ENCODE measurements at regions of chr14 and their contacts with region 1.

Region 1: GRCh38 chr14:21241218-21241819 is 27.9 kb downstream of the HNRNPC start:
- DNase-seq: peak; percentile 25
- H3K4me3 Mint-ChIP-seq: no peak overlapping the region
- H3K27ac Mint-ChIP-seq: peak overlapping the region; percentile 65
- H3K4me1 Mint-ChIP-seq: peaks cover 57% of the 10 kb centered on the region
- H3K27me3 Mint-ChIP-seq: no peaks in the 10 kb centered on the region

Region 2: GRCh38 chr14:21215130-21215878 is 26.0 kb before region 1 on chr14:
- CTCF ChIA-PET with region 1: no interaction called
- POLR2A ChIA-PET with region 1: no interaction called
- DNase-seq: no peak
- H3K4me3 Mint-ChIP-seq: no peak overlapping the region
- H3K27ac Mint-ChIP-seq: peak overlapping the region; percentile 77
- H3K4me1 Mint-ChIP-seq: peaks cover 52% of the 10 kb centered on the region
- H3K27me3 Mint-ChIP-seq: no peaks in the 10 kb centered on the region

Region 3: DNA sequence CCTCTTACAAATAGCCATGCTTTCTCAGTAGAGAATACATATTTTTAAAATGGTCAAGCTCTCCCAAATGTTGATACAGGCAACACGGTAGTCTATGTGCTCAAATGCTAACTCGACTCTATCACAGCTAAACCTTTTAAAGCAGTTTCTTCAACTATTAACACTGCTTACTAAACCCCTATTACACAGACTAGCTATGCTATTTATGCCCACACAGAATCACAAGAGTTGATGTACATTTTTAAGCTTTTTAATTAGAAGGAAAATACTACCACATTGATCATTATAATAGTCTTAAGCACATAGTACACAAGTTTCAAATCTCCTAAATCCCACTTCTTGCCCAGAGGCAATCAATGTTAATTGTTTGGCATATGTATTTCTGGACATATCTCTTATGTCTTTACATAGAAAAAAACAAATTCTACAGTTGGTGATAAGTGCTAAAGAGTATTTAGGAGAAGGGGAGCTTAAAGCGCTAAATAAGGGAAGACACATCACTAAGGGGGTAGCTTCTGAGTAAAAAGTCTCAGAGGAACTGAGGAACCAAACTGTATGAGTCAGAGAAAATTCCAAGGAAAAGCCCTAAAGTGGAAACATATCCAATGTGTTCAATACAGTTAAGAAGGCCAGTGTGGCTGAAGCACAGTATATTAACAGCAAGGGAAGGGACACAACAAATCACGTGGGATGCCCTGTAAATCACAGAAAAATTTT is 14.2 kb after region 1 on chr14:
- CTCF ChIA-PET with region 1: interaction called, 14 read pairs
- POLR2A ChIA-PET with region 1: interaction called, 4 read pairs
- DNase-seq: no peak
- H3K4me3 Mint-ChIP-seq: no peak overlapping the region
- H3K27ac Mint-ChIP-seq: peak overlapping the region; percentile 69
- H3K4me1 Mint-ChIP-seq: peaks cover 59% of the 10 kb centered on the region
- H3K27me3 Mint-ChIP-seq: no peaks in the 10 kb centered on the region

Measured in activated CD4-positive, alpha-beta T cell treated with anti-CD3 and anti-CD28 coated beads, Interleukin-2, amount 10 ng/mL, durations not matched to agents 7 days and 5 days (primary cell).